SK-N-SH (cell line): ENCODE measurements at regions of chr5 and their contacts with region 1.

Region 1: GRCh38 chr5:172714491-172715421 is 56.2 kb downstream of the DUSP1 start:
- DNase-seq: peak; percentile 81
- H3K4me3 ChIP-seq: no peak overlapping the region; a peak in 1 of 4 replicates
- H3K27ac ChIP-seq: no peak overlapping the region
- H3K4me1 ChIP-seq: peaks cover 0 to 12% of the 10 kb centered on the region in 2 experiments; a peak in 1 of 4 replicates
- H3K27me3 ChIP-seq: no peaks in the 10 kb centered on the region
- CTCF ChIP-seq: peak; percentile 81
- EP300 ChIP-seq: no peak
- RAD21 ChIP-seq: peak; percentile 56

Region 2: GRCh38 chr5:172727551-172727950 is 12.8 kb after region 1 on chr5:
- CTCF ChIA-PET with region 1: interaction called, 31 read pairs
- POLR2A ChIA-PET with region 1: no interaction called
- DNase-seq: no peak
- H3K4me3 ChIP-seq: no peak overlapping the region
- H3K27ac ChIP-seq: no peak overlapping the region
- H3K4me1 ChIP-seq: no peaks in the 10 kb centered on the region
- H3K27me3 ChIP-seq: no peaks in the 10 kb centered on the region
- CTCF ChIP-seq: no peak
- EP300 ChIP-seq: no peak
- RAD21 ChIP-seq: no peak

Region 3: DNA sequence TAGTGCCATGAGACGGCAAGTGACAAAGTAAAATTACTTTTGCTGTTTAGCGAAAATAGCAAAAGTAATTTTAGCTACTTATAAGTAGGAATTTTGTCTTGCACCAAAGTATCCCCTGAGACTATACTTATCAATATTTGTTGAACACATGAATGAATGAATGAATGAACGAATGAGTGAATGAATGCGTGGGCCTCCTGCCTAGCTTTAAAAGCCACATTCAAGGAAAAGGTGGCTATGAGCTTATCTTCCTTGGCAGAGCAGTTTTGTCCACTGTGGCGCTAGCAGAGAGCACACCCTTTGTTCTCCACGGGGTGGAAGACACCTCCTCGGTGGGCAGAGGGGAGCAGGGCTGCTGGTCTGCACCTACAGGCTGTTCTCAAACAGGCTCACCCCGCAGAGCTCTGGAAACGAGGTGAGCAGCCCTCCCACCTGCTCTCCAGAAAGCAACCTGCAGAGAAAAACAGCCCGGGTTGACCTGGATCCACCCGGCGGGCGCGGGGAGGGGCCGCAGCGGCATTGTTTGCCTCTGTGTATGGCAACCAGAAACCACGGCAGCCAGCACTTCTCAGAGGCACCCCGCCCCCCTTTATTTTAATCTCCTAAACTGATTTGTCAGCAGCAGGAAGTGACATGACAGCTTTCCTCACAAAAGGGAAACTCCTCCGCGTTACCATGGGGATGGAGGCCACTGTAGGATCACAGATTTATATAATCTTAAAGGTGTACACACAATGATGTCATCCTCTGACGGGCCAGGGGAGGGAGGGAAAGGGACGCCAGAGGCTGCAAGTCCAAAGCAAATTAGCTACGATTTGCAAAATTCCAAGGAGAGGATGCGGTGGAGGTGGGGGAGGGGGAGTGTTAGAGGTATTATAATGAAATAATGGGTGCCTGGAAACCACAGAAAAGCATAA is 50.4 kb after region 1 on chr5:
- CTCF ChIA-PET with region 1: interaction called, 113 read pairs
- POLR2A ChIA-PET with region 1: interaction called, 12 read pairs
- DNase-seq: peak; percentile 93
- H3K4me3 ChIP-seq: peak overlapping the region; percentile 58 to 59
- H3K27ac ChIP-seq: peak overlapping the region; percentile 98 to 100
- H3K4me1 ChIP-seq: peaks cover 4 to 37% of the 10 kb centered on the region in 2 experiments; a peak in 2 of 4 replicates
- H3K27me3 ChIP-seq: no peaks in the 10 kb centered on the region
- CTCF ChIP-seq: peak; percentile 17; the same call in 1 of the 2 replicates
- EP300 ChIP-seq: peak in 1 of 2 experiments; percentile 68; a peak in 2 of 4 replicates
- RAD21 ChIP-seq: no peak

Region 4: GRCh38 chr5:172833686-172834414 is 119.1 kb after region 1 on chr5 and contains the start of gene ERGIC1:
- CTCF ChIA-PET with region 1: interaction called, 11 read pairs
- POLR2A ChIA-PET with region 1: no interaction called
- DNase-seq: peak; percentile 95
- H3K4me3 ChIP-seq: peak within 1 kb of the TSS; percentile 64 to 92
- H3K27ac ChIP-seq: peak within 1 kb of the TSS; percentile 59 to 73
- H3K4me1 ChIP-seq: peaks cover 0 to 21% of the 10 kb centered on the region in 2 experiments; a peak in 2 of 4 replicates
- H3K27me3 ChIP-seq: no peaks in the 10 kb centered on the region
- CTCF ChIP-seq: no peak; the same call in 1 of the 2 replicates
- EP300 ChIP-seq: no peak
- RAD21 ChIP-seq: no peak
- polyA plus RNA-seq, gene ERGIC1: 101 and 111 TPM in 2 replicates

Region 5: GRCh38 chr5:172932313-172933017 is 217.7 kb after region 1 on chr5:
- CTCF ChIA-PET with region 1: interaction called, 508 read pairs
- POLR2A ChIA-PET with region 1: interaction called, 4 read pairs
- DNase-seq: peak; percentile 86
- H3K4me3 ChIP-seq: no peak overlapping the region; a peak in 1 of 4 replicates
- H3K27ac ChIP-seq: peak overlapping the region in 1 of 2 experiments; percentile 89; a peak in 2 of 4 replicates
- H3K4me1 ChIP-seq: peaks cover 0 to 19% of the 10 kb centered on the region in 2 experiments; a peak in 2 of 4 replicates
- H3K27me3 ChIP-seq: no peaks in the 10 kb centered on the region
- CTCF ChIP-seq: peak; percentile 91
- EP300 ChIP-seq: no peak
- RAD21 ChIP-seq: peak; percentile 87